Head of caudate nucleus (tissue), 42 donors: ENCODE measurements at regions of chr12 and their contacts with region 1.

Region 1: DNA sequence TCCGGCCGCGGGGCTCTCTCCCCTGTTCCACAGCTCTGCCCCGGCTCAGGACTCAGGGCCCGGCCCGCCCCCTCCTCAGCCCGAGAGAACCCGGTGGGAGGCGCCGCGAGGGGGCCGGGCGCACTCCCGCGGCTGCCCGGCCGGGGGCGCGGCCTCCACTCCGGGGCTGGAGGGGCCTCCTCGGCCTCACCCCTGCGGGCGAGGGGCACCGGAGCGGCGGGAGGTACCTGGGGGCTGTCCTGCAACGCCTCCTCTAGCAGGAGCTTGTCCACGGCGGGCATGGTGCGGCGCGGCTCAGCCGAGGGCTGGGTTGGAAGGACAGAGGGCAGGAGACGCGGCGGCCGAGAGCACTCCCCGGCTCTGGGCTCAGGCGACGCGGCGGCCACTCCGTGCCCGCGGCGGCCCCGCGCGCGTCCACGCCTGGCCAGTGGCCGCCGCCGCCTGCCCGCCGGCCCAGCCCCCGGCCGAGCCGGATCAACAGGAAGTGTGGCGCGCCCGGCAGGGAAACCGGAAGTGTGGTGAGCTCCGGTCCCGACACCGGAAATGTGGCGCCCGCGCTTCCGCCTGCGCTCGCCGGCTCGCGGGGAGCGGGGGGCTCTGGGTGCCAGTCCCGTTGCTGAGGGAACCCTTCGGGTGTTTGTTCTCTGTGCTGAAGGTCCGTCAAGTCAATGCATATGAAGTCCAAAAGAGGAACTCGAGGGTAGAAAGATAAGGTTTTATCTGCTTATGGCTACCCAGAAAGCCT is at the start of gene APPL2:
- DNase-seq: peak; percentile 71 to 96 (median 92)

Region 2: DNA sequence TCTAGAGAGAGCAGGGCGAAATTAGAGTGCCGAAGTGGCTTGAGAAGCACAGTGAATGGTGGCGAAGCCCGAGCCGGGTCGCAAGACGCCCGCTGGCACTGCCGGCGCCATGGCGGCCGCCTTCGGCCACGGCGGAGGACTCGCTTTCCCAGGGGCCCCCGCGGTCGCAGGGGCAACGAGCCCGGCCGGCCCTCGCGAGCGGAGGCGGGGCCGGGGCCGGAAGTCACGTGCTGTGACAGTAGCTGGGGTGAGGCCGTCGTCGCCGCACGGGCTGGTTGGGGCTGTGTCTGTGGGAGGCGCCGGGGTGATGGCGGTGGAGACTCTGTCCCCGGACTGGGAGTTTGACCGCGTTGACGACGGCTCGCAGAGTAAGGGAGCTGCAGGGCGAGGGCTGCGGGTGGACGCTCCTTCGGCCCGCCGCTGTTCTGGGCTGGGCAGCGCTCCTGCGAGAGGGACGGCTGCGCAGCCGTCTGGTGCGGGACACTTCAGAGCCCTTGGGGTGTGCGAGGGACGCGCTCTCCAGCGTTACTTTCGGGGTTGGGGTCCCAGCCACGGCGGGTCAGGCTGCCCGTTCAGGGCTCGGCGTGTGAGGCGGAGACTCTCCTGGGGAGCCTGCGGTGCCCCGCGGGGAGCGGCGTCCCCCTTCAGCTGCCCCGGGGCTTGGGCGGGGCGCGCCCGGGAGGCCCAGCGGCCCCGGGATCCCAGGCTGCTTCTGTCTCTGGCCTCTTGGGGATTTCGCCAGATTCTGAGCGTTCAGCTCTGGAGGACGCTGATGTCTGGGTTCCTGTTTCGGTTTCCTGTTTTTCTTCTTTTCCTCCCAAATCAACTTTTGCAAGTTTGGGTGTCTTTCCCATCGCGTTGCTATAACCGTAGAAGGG is 128.2 kb before region 1 on chr12 and contains the start of gene WASHC4:
- intact Hi-C with region 1: loop called (anchors 2 kb)
- DNase-seq: peak; percentile 80 to 98 (median 95)

Region 3: DNA sequence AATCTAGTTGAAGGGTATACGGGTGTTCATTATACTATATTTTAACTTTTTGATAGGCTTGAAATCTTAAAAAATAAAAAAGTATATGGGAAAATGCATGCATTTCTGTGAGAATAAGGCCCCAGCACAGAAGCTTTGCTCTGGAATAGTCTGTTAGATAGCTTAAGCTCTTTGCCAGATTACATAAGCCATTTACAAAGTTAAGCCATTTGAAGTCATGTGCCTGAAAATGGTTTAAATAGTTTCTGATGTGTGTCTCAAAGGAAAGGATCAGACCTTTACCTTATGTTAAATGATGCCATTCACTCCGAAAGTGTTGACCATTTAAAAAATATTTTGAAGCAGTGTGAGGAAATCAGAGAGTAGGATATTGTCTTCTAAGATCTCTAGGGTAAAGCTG is 77.0 kb before region 1 on chr12:
- intact Hi-C with region 1: no loop called
- DNase-seq: no peak